B cell (primary cell): ENCODE measurements at regions of chr12 and their contacts with region 1.

Region 1: GRCh38 chr12:47276621-47277309 is 197.0 kb upstream of the AMIGO2 start:
- DNase-seq: peak; percentile 64
- ATAC-seq: peak; percentile 90
- H3K4me3 ChIP-seq: peak overlapping the region in 2 of 5 experiments; percentile 20 to 31
- H3K4me3 Mint-ChIP-seq: peak overlapping the region; percentile 72
- H3K27ac ChIP-seq: peak overlapping the region; percentile 70 to 88
- H3K27ac Mint-ChIP-seq: peak overlapping the region; percentile 94
- H3K4me1 ChIP-seq: peaks cover 49 to 51% of the 10 kb centered on the region in 2 donors
- H3K4me1 Mint-ChIP-seq: peaks cover 65% of the 10 kb centered on the region
- H3K27me3 ChIP-seq: no peaks in the 10 kb centered on the region
- H3K27me3 Mint-ChIP-seq: no peaks in the 10 kb centered on the region
- CTCF ChIP-seq: no peak

Region 2: GRCh38 chr12:47234629-47235028 is 42.1 kb before region 1 on chr12:
- CTCF ChIA-PET with region 1: no interaction called
- POLR2A ChIA-PET with region 1: no interaction called
- intact Hi-C with region 1: no loop called
- DNase-seq: no peak
- ATAC-seq: no peak
- H3K4me3 ChIP-seq: no peak overlapping the region
- H3K4me3 Mint-ChIP-seq: no peak overlapping the region
- H3K27ac ChIP-seq: no peak overlapping the region
- H3K27ac Mint-ChIP-seq: no peak overlapping the region
- H3K4me1 ChIP-seq: peaks cover 0 to 3% of the 10 kb centered on the region in 2 donors
- H3K4me1 Mint-ChIP-seq: peaks cover 32% of the 10 kb centered on the region
- H3K27me3 ChIP-seq: no peaks in the 10 kb centered on the region
- H3K27me3 Mint-ChIP-seq: no peaks in the 10 kb centered on the region
- CTCF ChIP-seq: no peak

Region 3: DNA sequence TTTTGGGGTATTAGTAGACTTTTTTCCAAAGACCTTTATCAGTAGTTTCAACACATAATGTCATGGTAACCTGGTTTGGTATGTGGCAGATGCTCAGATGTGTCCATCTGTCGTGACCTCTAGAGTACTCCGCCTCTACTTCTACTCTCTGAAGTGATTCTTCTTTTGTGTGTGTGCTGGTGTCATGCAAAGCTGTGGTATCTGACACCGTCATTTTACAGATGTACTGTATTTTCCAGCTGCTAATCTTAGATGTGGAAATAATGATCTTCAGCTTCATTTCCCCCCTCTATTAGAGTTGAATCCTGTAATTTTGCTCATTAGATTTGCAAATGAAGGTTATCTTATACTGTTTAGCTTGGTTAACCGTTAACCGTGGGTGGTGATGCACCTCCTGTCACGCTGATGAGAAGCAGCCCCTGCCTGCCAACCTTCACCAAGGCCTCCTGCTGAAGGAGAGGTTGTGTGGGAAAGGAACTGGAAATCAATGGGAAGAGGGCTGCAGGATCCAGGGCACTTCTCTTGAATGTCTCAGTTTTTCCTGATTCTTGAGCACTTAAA is 25.4 kb after region 1 on chr12:
- CTCF ChIA-PET with region 1: interaction called, 11 read pairs
- POLR2A ChIA-PET with region 1: interaction called, 3 read pairs
- intact Hi-C with region 1: loop called (anchors 2 kb)
- DNase-seq: no peak
- ATAC-seq: peak; percentile 56
- H3K4me3 ChIP-seq: no peak overlapping the region
- H3K4me3 Mint-ChIP-seq: peak overlapping the region; percentile 15
- H3K27ac ChIP-seq: no peak overlapping the region
- H3K27ac Mint-ChIP-seq: peak overlapping the region; percentile 66
- H3K4me1 ChIP-seq: peaks cover 4 to 21% of the 10 kb centered on the region in 2 donors
- H3K4me1 Mint-ChIP-seq: peaks cover 63% of the 10 kb centered on the region
- H3K27me3 ChIP-seq: no peaks in the 10 kb centered on the region
- H3K27me3 Mint-ChIP-seq: no peaks in the 10 kb centered on the region
- CTCF ChIP-seq: no peak

Region 4: GRCh38 chr12:47361389-47362021 is 84.7 kb after region 1 on chr12:
- CTCF ChIA-PET with region 1: no interaction called
- POLR2A ChIA-PET with region 1: interaction called, 3 read pairs
- intact Hi-C with region 1: loop called (anchors 1 kb)
- DNase-seq: peak; percentile 76
- ATAC-seq: peak; percentile 51
- H3K4me3 ChIP-seq: peak overlapping the region; percentile 24 to 52 (median 47)
- H3K4me3 Mint-ChIP-seq: peak overlapping the region; percentile 87
- H3K27ac ChIP-seq: peak overlapping the region; percentile 93 to 96
- H3K27ac Mint-ChIP-seq: peak overlapping the region; percentile 98
- H3K4me1 ChIP-seq: peaks cover 71% of the 10 kb centered on the region in 2 donors
- H3K4me1 Mint-ChIP-seq: peaks cover 62% of the 10 kb centered on the region
- H3K27me3 ChIP-seq: no peaks in the 10 kb centered on the region
- H3K27me3 Mint-ChIP-seq: no peaks in the 10 kb centered on the region
- CTCF ChIP-seq: no peak